K562 (cell line): ENCODE measurements at regions of chr5 and their contacts with region 1.

Region 1: DNA sequence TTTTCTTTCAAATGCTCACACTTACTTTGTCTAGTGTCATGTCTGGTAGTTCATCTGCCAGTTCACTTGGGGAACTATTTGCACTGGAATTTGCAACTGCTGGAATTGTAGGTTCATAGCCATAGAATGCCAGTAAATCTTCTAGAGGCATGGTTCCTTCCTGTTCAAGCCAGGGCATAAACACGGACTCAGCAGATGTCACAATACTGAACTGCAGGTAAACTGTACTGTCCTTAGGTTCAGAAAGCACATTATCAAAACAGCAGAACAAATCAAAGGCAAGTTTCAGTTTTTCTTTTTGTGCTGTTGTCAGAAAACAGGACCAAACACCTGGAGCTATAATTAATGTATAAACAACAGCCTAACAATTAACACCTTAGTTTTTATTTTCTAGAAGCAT is 13.1 kb downstream of the MIER3 start:
- DNase-seq: no peak
- ATAC-seq: no peak
- H3K4me3 ChIP-seq: no peak overlapping the region
- H3K27ac ChIP-seq: no peak overlapping the region
- H3K4me1 ChIP-seq: no peaks in the 10 kb centered on the region
- H3K27me3 ChIP-seq: no peaks in the 10 kb centered on the region
- CTCF ChIP-seq: no peak
- EP300 ChIP-seq: no peak
- POLR2A ChIP-seq: no peak
- RAD21 ChIP-seq: no peak

Region 2: GRCh38 chr5:55675119-55675518 is 1263.7 kb before region 1 on chr5:
- CTCF ChIA-PET with region 1: no interaction called
- POLR2A ChIA-PET with region 1: no interaction called
- in situ Hi-C with region 1: no loop called
- intact Hi-C with region 1: no loop called
- DNase-seq: no peak
- ATAC-seq: no peak
- H3K4me3 ChIP-seq: no peak overlapping the region
- H3K27ac ChIP-seq: no peak overlapping the region
- H3K4me1 ChIP-seq: no peaks in the 10 kb centered on the region
- H3K27me3 ChIP-seq: no peaks in the 10 kb centered on the region
- CTCF ChIP-seq: no peak
- EP300 ChIP-seq: no peak
- POLR2A ChIP-seq: no peak
- RAD21 ChIP-seq: no peak

Region 3: GRCh38 chr5:56881571-56881970 is 57.3 kb before region 1 on chr5:
- CTCF ChIA-PET with region 1: no interaction called
- POLR2A ChIA-PET with region 1: no interaction called
- in situ Hi-C with region 1: no loop called
- intact Hi-C with region 1: no loop called
- DNase-seq: no peak
- ATAC-seq: no peak
- H3K4me3 ChIP-seq: no peak overlapping the region
- H3K27ac ChIP-seq: no peak overlapping the region
- H3K4me1 ChIP-seq: no peaks in the 10 kb centered on the region; a peak in 1 of 5 replicates
- H3K27me3 ChIP-seq: no peaks in the 10 kb centered on the region
- CTCF ChIP-seq: no peak
- EP300 ChIP-seq: no peak
- POLR2A ChIP-seq: no peak
- RAD21 ChIP-seq: no peak

Region 4: DNA sequence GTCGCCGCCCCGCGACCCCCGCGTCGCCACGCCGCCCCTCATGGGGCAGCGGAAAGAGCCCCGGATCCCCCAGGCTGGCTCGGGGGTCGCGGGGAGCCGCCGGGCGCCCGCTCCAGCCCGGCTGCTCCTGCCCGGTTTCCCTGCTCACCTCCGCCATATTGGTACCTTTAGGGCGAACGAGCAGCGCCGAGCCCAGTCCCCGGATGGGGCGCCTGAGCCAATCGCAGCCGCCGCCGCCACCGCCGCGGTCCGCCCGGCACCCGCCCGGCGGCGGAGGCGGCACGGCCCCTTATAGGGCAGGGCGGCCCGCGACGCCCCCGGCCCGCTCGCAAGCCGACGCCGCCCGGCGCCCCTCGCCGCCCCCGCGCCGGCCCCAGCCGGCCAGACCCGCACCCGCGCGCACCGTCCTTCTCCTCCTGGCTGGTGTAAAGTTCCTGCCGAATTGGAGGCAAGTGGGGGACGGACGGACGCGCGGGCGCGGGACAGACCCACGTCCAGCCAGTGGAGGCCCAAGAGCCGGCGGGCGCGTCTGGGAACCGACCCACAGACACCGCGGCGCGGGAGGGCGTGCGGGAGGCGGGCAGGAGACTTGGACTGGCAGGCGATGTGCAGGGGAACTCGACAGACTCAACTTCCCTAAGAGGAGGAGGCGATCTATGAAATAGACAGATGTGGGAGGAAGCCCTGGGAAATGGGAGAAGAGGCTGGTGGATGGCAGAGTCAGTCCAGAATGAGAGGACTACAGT is 13.3 kb after region 1 on chr5 and contains the start of gene MIER3:
- CTCF ChIA-PET with region 1: no interaction called
- POLR2A ChIA-PET with region 1: interaction called, 16 read pairs
- in situ Hi-C with region 1: no loop called
- intact Hi-C with region 1: no loop called
- DNase-seq: peak; percentile 79 to 96 (median 94)
- ATAC-seq: peak; percentile 90
- H3K4me3 ChIP-seq: peak within 1 kb of the TSS; percentile 64
- H3K27ac ChIP-seq: peak within 1 kb of the TSS; percentile 67; the same call in 2 of the 3 replicates
- H3K4me1 ChIP-seq: peaks cover 7 to 17% of the 10 kb centered on the region in 2 experiments; a peak in 4 of 5 replicates
- H3K27me3 ChIP-seq: peaks cover 0 to 6% of the 10 kb centered on the region in 2 experiments; a peak in 3 of 5 replicates
- CTCF ChIP-seq: no peak
- EP300 ChIP-seq: no peak
- POLR2A ChIP-seq: no peak; the same call in 1 of the 2 replicates
- RAD21 ChIP-seq: no peak
- polyA plus RNA-seq, gene MIER3: 4.1 to 6.2 TPM

Region 5: GRCh38 chr5:57042524-57042931 is 103.7 kb after region 1 on chr5:
- CTCF ChIA-PET with region 1: no interaction called
- POLR2A ChIA-PET with region 1: no interaction called
- in situ Hi-C with region 1: no loop called
- intact Hi-C with region 1: no loop called
- DNase-seq: peak in 2 of 4 experiments; percentile 50 to 52
- ATAC-seq: peak; percentile 89
- H3K4me3 ChIP-seq: no peak overlapping the region
- H3K27ac ChIP-seq: no peak overlapping the region
- H3K4me1 ChIP-seq: peaks cover 0 to 12% of the 10 kb centered on the region in 2 experiments; a peak in 2 of 5 replicates
- H3K27me3 ChIP-seq: peaks cover 0 to 6% of the 10 kb centered on the region in 2 experiments; a peak in 3 of 5 replicates
- CTCF ChIP-seq: no peak
- EP300 ChIP-seq: peak; percentile 90
- POLR2A ChIP-seq: no peak
- RAD21 ChIP-seq: no peak